Activated T-helper 1 cell treated with anti-CD3 and anti-CD28 coated beads, Interleukin-12 subunit alpha, Interleukin-12 subunit beta, Interleukin-2, Interleukin-4 antibody, amounts not matched to agents 30 ng/mL and 10 ng/mL and 1 ng/mL, durations not matched to agents 14 hours and 24 hours and 36 hours (primary cell): ENCODE measurements at regions of chr22 and their contacts with region 1.

Region 1: DNA sequence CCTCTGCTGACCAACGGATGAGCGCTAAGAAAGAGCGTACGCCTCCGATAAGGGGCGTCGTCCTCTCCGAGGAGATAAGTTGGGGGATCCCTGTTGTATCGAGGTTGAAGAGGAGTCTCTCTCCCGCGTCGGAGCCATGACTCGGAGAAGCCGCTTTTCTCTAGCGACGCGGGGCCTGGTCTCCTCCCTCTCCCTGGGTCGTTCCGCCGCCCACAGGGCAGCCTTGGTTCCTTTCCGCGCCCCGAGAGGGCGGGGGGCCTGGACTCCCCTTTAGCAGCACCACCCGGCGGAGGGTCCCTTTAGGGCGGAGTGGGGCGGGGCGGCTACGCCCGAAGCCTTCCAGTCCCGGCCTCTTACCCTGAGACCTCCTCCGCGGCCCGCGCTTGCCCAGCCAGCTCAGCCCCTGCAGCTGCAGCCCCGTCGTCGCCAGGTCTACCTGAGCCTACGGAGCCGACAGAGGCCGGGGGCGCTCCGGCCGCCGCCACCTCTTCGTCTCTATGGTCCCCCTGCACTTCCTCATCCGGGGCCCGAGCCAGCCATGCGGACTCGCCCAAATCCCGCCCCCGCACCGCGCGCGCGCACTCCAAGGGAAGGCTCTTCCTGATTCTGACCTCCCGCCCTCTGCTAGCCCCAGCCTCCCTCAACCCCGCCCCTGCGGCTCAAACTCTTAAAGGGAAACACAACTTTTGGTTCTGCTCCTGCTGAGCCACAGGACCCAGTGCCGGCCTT is at the start of gene PRR14L:
- DNase-seq: peak; percentile 98
- H3K4me3 Mint-ChIP-seq: peak within 1 kb of the TSS; percentile 87
- H3K27ac Mint-ChIP-seq: peak within 1 kb of the TSS; percentile 97
- H3K4me1 Mint-ChIP-seq: peaks cover 49% of the 10 kb centered on the region
- H3K27me3 Mint-ChIP-seq: no peaks in the 10 kb centered on the region
- total RNA-seq, gene PRR14L: 65.2 and 69.6 TPM in 2 replicates

Region 2: GRCh38 chr22:31107178-31107893 is 642.5 kb before region 1 on chr22 and contains the start of gene SELENOM:
- intact Hi-C with region 1: loop called (anchors 5 kb)
- DNase-seq: peak; percentile 86
- H3K4me3 Mint-ChIP-seq: peak within 1 kb of the TSS; percentile 83
- H3K27ac Mint-ChIP-seq: peak within 1 kb of the TSS; percentile 33
- H3K4me1 Mint-ChIP-seq: peaks cover 19% of the 10 kb centered on the region
- H3K27me3 Mint-ChIP-seq: peaks cover 6% of the 10 kb centered on the region
- total RNA-seq, gene SELENOM: 6.4 and 9.8 TPM in 2 replicates

Region 3: DNA sequence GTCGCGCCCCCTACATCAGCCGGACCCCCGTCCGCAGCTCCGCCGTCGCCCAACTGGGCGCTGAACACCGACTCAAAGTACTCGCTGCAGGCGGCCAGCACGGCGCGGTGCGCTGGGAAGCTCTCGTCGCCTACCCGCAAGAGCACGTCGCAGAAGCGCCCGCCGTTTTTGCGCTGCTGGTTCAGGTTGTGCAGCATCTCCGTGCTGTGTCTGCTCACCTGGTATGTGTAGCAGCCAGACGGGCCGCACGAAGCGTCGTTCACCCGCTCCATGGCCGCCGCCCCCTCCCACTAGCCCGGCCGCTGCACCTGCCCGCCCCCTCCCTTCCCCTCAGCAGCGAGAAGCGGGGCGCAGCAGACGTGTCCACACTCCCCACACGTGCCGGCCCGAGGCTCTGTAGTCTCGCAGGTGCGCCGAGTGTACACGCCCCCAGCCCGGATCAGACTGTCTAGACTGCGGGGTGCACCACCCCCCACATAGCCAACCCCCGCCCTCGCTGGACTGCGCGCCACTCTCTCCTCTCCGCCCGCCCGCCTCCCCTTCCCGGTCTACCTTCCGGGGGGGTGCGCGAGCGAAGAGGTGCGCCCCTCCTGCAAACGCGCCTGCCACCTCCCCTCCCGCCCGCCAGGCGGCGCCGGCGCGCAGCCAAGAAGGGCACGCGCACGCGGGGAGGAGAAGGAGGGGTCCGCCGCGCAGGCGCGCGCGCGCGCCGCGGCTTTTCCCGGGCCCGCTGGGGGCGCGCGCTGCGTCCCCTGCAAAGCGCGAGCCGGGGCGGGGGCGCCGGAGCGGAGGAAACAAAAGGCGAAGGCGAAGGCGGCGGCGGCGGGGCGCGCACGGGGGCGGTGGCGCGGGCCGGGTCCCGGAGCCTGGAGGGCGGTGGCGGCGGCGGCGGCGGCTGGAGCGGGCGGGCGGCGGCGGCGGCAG is 404.2 kb before region 1 on chr22:
- intact Hi-C with region 1: loop called (anchors 5 kb)
- DNase-seq: peak; percentile 85
- H3K4me3 Mint-ChIP-seq: peak overlapping the region; percentile 87
- H3K27ac Mint-ChIP-seq: peak overlapping the region; percentile 89
- H3K4me1 Mint-ChIP-seq: peaks cover 48% of the 10 kb centered on the region
- H3K27me3 Mint-ChIP-seq: no peaks in the 10 kb centered on the region

Region 4: GRCh38 chr22:31496007-31496734 is 253.6 kb before region 1 on chr22 and contains the start of gene SFI1:
- intact Hi-C with region 1: loop called (anchors 5 kb)
- DNase-seq: peak; percentile 94
- H3K4me3 Mint-ChIP-seq: peak within 1 kb of the TSS; percentile 99
- H3K27ac Mint-ChIP-seq: peak within 1 kb of the TSS; percentile 99
- H3K4me1 Mint-ChIP-seq: peaks cover 40% of the 10 kb centered on the region
- H3K27me3 Mint-ChIP-seq: no peaks in the 10 kb centered on the region
- total RNA-seq, gene SFI1: 406 and 416 TPM in 2 replicates

Region 5: DNA sequence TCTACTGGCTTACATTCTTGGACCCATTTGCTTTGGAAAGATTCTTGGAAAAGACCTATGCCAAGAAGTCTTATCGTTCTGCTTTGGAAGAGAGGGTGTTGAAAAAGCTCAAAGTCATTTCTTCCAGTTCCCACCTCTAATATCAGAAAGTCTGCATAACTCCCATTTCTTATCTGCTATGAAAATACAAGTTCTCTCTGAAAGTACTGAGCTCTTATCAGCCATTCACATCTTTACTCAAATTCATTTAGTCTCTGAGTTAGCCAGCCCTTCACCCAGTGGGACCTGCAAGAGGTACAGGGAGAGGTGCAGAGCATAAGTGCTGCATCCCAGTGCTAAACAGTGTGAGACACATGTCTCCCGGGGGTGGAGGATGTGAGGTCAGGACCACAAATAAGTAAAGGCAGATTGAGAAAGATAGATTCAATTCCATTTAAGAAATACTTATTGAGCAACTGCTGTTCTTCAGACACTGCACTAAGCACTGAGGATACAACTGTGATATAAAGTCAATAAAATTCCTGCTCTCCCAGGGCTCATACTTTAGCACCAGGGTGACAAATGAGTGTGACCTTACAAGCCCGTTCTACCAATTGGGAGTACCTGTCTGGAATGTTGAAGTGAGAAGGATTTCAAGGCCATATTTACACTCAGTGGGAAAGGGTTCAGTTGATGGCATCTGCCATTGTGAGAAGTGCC is 164.5 kb before region 1 on chr22:
- intact Hi-C with region 1: no loop called
- DNase-seq: no peak
- H3K4me3 Mint-ChIP-seq: peak overlapping the region; percentile 31
- H3K27ac Mint-ChIP-seq: peak overlapping the region; percentile 85
- H3K4me1 Mint-ChIP-seq: peaks cover 52% of the 10 kb centered on the region
- H3K27me3 Mint-ChIP-seq: no peaks in the 10 kb centered on the region

Region 6: GRCh38 chr22:31676700-31677099 is 73.1 kb before region 1 on chr22:
- intact Hi-C with region 1: loop called (anchors 1 kb)
- DNase-seq: peak; percentile 91
- H3K4me3 Mint-ChIP-seq: peak overlapping the region; percentile 95
- H3K27ac Mint-ChIP-seq: peak overlapping the region; percentile 92
- H3K4me1 Mint-ChIP-seq: peaks cover 12% of the 10 kb centered on the region
- H3K27me3 Mint-ChIP-seq: no peaks in the 10 kb centered on the region

Region 7: GRCh38 chr22:31707519-31707918 is 42.3 kb before region 1 on chr22:
- intact Hi-C with region 1: no loop called
- DNase-seq: no peak
- H3K4me3 Mint-ChIP-seq: no peak overlapping the region
- H3K27ac Mint-ChIP-seq: no peak overlapping the region
- H3K4me1 Mint-ChIP-seq: peaks cover 5% of the 10 kb centered on the region
- H3K27me3 Mint-ChIP-seq: no peaks in the 10 kb centered on the region

Region 8: GRCh38 chr22:31829505-31829904 is 79.7 kb after region 1 on chr22:
- intact Hi-C with region 1: loop called (anchors 2 kb)
- DNase-seq: peak; percentile 7
- H3K4me3 Mint-ChIP-seq: peak overlapping the region; percentile 72
- H3K27ac Mint-ChIP-seq: peak overlapping the region; percentile 95
- H3K4me1 Mint-ChIP-seq: peaks cover 30% of the 10 kb centered on the region
- H3K27me3 Mint-ChIP-seq: no peaks in the 10 kb centered on the region

Region 9: DNA sequence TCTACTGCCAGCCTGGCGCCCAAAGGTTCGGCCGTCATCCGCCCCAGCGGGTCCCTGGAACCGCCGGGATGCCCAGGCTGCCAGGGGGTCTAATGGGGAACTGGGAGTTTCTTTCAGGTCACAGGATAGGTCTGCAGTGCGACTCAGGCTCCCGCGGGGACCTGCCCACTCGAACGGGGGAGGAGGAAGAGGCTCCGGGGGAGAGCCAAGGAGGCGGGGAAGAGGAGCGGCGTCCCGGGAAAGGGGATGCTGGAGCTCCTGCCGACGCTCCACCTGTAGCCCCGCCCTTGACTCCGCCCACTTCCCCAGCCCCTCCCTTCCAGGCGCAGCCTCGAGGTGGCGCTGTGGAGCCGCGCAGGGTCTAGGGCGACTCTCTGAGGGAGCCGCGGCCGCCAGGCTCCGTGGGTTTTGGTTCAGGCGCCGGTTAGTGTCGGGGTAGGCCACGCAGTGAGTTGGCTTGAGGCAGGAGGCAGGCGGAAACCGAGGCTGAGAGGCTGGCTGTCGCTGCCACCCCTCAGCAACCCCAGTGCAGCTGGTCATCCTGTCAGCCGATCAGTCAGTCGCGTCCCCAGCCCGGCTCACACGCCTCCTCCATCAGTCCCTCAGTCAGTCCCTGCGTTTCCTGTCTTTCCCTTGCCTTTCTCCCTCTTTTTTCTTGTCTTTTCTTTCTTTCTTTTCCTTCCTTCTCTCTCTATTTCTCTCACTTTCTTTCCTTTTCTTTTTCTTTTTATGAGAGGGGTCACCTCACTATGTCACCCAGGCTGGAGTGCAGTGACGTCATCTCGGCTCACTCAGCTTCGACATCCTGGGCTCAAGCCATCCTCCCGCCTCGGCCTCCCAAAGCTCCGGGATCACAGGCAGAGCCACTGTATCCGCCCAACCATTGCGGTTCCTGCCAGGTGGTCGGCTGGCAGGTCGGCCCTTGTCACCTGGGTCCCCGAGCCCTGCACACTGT is 221.0 kb after region 1 on chr22:
- intact Hi-C with region 1: loop called (anchors 1 kb)
- DNase-seq: peak; percentile 86
- H3K4me3 Mint-ChIP-seq: peak overlapping the region; percentile 77
- H3K27ac Mint-ChIP-seq: no peak overlapping the region
- H3K4me1 Mint-ChIP-seq: peaks cover 14% of the 10 kb centered on the region
- H3K27me3 Mint-ChIP-seq: peaks cover 4% of the 10 kb centered on the region